ENCODE measurements at regions of chr9 and their contacts with region 1.

Region 1: GRCh38 chr9:22079873-22080341 is 70.8 kb upstream of the CDKN2B start:
- DNase-seq: peak; percentile 93
- H3K4me3 ChIP-seq: no peak overlapping the region
- H3K27ac ChIP-seq: peak overlapping the region; percentile 39
- H3K4me1 ChIP-seq: peaks cover 25% of the 10 kb centered on the region
- H3K27me3 ChIP-seq: no peaks in the 10 kb centered on the region
- CTCF ChIP-seq: no peak

Region 2: GRCh38 chr9:22049411-22049810 is 30.5 kb before region 1 on chr9:
- CTCF ChIA-PET with region 1: no interaction called
- dilution Hi-C with region 1: loop called (anchors 5 kb)
- in situ Hi-C with region 1: no loop called
- intact Hi-C with region 1: no loop called
- DNase-seq: peak; percentile 28
- H3K4me3 ChIP-seq: no peak overlapping the region
- H3K27ac ChIP-seq: no peak overlapping the region
- H3K4me1 ChIP-seq: peaks cover 30% of the 10 kb centered on the region
- H3K27me3 ChIP-seq: no peaks in the 10 kb centered on the region
- CTCF ChIP-seq: no peak

Region 3: GRCh38 chr9:22136451-22137163 is 56.7 kb after region 1 on chr9:
- CTCF ChIA-PET with region 1: no interaction called
- dilution Hi-C with region 1: no loop called
- in situ Hi-C with region 1: loop called in 1 of 2 experiments (anchors 10 kb)
- intact Hi-C with region 1: no loop called
- DNase-seq: peak; percentile 70
- H3K4me3 ChIP-seq: no peak overlapping the region
- H3K27ac ChIP-seq: peak overlapping the region; percentile 23
- H3K4me1 ChIP-seq: peaks cover 46% of the 10 kb centered on the region
- H3K27me3 ChIP-seq: no peaks in the 10 kb centered on the region
- CTCF ChIP-seq: no peak

Region 4: DNA sequence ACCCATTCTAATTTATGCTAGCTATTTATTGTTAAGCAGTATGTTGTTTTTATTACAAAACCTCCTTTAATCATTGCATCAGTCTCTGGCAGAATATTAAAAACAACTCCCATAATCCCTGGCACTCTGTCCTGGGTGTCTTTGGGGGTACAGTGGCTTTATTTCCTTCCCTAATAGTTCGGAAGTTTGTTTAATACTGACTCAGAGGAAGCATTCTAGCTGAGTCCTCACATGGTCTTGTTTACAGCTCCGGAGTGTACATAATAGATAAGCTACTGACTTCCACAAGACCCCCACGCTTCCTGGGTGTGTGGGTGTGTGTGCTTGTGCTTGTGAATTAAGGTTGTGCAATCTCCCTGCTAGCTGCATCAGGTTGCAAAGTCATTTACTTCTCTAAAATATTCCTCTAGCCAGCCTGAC is 79.0 kb after region 1 on chr9:
- CTCF ChIA-PET with region 1: no interaction called
- dilution Hi-C with region 1: no loop called
- in situ Hi-C with region 1: no loop called
- intact Hi-C with region 1: no loop called
- DNase-seq: no peak
- H3K4me3 ChIP-seq: no peak overlapping the region
- H3K27ac ChIP-seq: peak overlapping the region; percentile 69
- H3K4me1 ChIP-seq: peaks cover 30% of the 10 kb centered on the region
- H3K27me3 ChIP-seq: no peaks in the 10 kb centered on the region
- CTCF ChIP-seq: no peak

Measured in mammary epithelial cell (primary cell).